ENCODE measurements at regions of chr20 and their contacts with region 1.

Region 1: DNA sequence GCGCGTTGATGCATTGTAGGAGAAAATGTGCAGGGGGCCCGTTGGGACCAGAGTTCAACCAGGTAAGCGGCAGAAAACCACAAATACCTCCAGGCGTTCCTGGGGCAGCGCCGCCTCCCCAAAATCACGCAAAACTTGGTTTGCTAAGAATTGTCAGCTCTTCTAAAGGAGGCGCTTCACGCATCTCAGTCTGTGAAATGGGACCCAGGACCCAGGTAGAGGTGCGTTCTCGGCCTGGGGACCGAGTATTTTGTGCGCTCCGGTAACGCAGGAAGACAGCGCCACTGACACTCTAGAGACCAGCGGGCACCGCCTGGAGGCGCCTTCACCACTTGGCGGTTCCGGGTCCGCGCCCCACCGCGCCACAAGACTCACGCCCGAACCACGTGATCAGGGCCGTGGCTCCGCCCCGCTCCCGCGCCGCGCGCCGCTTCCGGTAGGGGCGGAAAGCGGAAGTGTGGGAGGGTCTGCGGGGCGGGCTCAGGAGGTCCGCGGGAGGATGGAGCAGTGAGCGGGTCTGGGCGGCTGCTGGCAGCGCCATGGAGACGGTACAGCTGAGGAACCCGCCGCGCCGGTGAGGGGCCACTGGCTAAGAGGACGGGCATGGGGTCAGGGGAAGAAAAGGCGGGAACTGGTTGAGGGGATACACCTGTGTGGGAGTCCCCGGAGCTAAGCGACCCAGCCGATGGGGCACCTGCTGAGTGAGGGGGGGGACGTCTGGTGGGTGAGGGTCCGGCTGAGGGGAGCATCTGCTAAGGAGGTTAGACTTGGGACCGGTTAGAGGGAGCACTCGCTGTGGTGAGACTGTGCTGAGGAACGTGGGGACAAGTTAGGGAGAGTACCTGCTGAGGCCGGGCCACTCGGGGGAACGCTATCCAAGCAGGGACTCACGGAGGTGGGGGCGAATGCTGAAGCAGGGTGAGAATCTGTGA is at the start of gene STK4:
- DNase-seq: peak; percentile 96
- H3K4me3 Mint-ChIP-seq: peak within 1 kb of the TSS; percentile 88
- H3K27ac Mint-ChIP-seq: peak within 1 kb of the TSS; percentile 98
- H3K4me1 Mint-ChIP-seq: peaks cover 56% of the 10 kb centered on the region
- H3K27me3 Mint-ChIP-seq: no peaks in the 10 kb centered on the region
- total RNA-seq, gene STK4: 110 to 116 TPM

Region 2: GRCh38 chr20:44210422-44211176 is 755.7 kb before region 1 on chr20 and contains the start of gene OSER1:
- CTCF ChIA-PET with region 1: no interaction called
- intact Hi-C with region 1: loop called (anchors 10 kb)
- DNase-seq: peak; percentile 99
- H3K4me3 Mint-ChIP-seq: peak within 1 kb of the TSS; percentile 94
- H3K27ac Mint-ChIP-seq: peak within 1 kb of the TSS; percentile 92
- H3K4me1 Mint-ChIP-seq: peaks cover 61% of the 10 kb centered on the region
- H3K27me3 Mint-ChIP-seq: no peaks in the 10 kb centered on the region
- total RNA-seq, gene OSER1: 27.7 to 28.4 TPM

Measured in activated naive CD4-positive, alpha-beta T cell treated with anti-CD3 and anti-CD28 coated beads for 36 hours (primary cell).